Lower lobe of right lung (tissue), 2 donors: ENCODE measurements at regions of chr5 and their contacts with region 1.

Region 1: GRCh38 chr5:150560401-150561193 is 52.7 kb downstream of the NDST1 start:
- DNase-seq: peak; percentile 68
- ATAC-seq: peak; percentile 91 to 92
- H3K4me3 ChIP-seq: no peak overlapping the region
- H3K27ac ChIP-seq: no peak overlapping the region
- H3K4me1 ChIP-seq: no peaks in the 10 kb centered on the region
- H3K27me3 ChIP-seq: no peaks in the 10 kb centered on the region
- CTCF ChIP-seq: peak; percentile 95

Region 2: GRCh38 chr5:150487199-150488061 is 73.2 kb before region 1 on chr5:
- intact Hi-C with region 1: no loop called
- DNase-seq: no peak
- ATAC-seq: peak; percentile 23 to 34
- H3K4me3 ChIP-seq: peak overlapping the region; percentile 80
- H3K27ac ChIP-seq: peak overlapping the region; percentile 88
- H3K4me1 ChIP-seq: peaks cover 65% of the 10 kb centered on the region
- H3K27me3 ChIP-seq: no peaks in the 10 kb centered on the region
- CTCF ChIP-seq: peak; percentile 12

Region 3: DNA sequence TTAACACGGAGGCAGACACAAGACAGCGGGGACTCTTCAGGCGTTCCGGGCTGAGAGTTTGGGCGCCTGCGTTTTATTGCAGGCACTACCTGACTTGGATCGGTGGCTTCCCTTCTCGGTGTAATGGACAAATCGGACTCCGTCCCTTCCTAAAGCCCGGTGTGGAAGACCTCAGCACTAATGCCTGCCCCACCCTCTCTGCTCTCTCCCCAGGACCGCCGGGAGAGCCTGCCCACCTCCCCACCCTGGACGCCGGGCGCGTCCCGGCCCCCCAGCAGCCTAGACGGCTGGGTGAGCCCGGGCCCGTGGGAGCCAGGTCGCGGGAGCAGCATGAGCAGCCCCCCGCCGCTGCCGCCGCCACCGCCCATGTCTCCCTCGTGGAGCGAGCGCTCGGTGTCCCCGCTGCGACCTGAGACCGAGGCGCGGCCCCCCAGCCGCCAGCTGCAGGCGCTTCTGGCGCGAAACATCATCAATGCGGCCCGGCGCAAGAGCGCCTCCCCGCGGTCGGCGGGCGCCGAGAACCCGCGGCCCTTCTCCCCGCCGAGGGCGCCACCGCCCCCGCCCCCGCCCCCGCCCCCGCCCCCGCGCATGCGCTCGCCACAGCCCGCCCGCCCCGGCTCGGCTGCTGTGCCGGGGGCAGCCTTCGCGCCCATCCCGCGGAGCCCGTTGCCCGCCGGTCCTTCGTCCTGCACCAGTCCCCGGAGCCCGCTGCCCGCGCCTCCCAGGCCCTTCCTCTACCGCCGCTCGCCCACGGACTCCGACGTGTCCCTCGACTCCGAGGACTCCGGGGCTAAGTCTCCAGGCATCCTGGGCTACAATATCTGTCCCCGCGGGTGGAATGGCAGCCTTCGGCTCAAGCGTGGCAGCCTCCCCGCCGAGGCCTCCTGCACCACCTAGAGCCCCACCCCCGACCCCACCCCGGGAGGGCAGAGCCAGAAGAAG is 95.9 kb after region 1 on chr5:
- intact Hi-C with region 1: loop called (anchors 5 kb)
- DNase-seq: peak; percentile 80
- ATAC-seq: peak; percentile 70 to 84
- H3K4me3 ChIP-seq: peak overlapping the region; percentile 58
- H3K27ac ChIP-seq: peak overlapping the region; percentile 76
- H3K4me1 ChIP-seq: peaks cover 41% of the 10 kb centered on the region
- H3K27me3 ChIP-seq: no peaks in the 10 kb centered on the region
- CTCF ChIP-seq: peak; percentile 62